IMR-90 (cell line): ENCODE measurements at regions of chr13 and their contacts with region 1.

Region 1: DNA sequence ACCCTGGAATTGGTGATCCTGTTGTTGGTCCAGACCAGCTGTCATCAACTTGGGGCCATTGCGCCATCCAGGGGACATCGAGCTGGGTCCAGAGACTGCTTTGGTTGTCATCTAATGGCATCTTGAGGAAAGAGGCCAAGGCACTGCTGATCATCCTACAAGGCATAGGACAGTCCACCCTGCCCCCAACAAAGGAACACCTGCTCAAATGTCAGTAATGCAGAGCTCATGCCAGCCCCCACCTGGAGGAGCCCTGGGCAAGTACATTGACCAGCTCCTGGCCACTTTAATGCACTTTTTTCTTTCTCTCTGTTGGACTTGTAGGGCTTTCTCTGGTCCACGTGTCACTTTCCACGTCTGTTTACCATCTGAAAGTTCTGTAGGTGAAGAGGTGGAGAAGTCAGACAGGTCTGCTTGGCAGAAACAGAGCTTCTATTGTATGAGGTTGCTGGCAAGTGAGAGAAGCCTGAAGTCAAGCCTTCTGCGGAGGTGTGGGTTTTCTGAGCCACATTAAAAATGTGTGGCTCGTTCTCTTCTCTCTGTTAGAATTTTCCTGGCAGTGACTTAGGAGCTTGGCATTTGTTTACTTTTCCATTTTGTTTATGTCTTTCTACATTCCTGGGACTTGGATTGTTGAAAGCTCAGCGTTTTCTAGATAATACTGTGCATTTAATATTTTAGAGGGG is 124.0 kb upstream of the RNF113B start:
- DNase-seq: peak; percentile 82
- ATAC-seq: peak; percentile 66
- H3K4me3 ChIP-seq: peak overlapping the region; percentile 14; the same call in 1 of the 2 replicates
- H3K27ac ChIP-seq: peak overlapping the region; percentile 94
- H3K4me1 ChIP-seq: peaks cover 47% of the 10 kb centered on the region
- H3K27me3 ChIP-seq: no peaks in the 10 kb centered on the region
- CTCF ChIP-seq: no peak
- POLR2A ChIP-seq: no peak
- RAD21 ChIP-seq: no peak

Region 2: DNA sequence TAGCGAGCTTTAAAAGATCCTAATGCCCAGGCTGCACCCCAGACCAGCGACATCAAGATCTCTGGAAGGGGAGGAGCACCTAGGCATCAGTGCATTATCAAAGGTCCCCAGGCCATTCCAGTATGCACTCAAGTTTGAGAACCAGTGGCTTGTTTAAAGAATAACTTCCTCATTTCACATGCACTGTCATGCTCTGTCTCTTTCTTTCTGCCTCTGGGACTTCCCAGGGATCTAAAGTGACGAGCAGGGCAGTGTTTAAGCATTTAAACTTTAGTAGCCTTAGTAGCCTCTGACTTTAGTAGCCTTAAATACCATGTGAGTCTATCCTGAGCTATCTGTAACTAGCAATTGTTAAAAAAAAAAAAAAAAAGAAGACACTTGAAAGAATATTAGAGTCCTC is 167.2 kb before region 1 on chr13:
- CTCF ChIA-PET with region 1: no interaction called
- POLR2A ChIA-PET with region 1: interaction called, 10 read pairs
- dilution Hi-C with region 1: no loop called
- in situ Hi-C with region 1: no loop called
- intact Hi-C with region 1: no loop called
- DNase-seq: no peak
- ATAC-seq: no peak
- H3K4me3 ChIP-seq: no peak overlapping the region
- H3K27ac ChIP-seq: no peak overlapping the region
- H3K4me1 ChIP-seq: peaks cover 2% of the 10 kb centered on the region; the same call in 1 of the 2 replicates
- H3K27me3 ChIP-seq: no peaks in the 10 kb centered on the region
- CTCF ChIP-seq: no peak
- POLR2A ChIP-seq: no peak
- RAD21 ChIP-seq: no peak

Region 3: DNA sequence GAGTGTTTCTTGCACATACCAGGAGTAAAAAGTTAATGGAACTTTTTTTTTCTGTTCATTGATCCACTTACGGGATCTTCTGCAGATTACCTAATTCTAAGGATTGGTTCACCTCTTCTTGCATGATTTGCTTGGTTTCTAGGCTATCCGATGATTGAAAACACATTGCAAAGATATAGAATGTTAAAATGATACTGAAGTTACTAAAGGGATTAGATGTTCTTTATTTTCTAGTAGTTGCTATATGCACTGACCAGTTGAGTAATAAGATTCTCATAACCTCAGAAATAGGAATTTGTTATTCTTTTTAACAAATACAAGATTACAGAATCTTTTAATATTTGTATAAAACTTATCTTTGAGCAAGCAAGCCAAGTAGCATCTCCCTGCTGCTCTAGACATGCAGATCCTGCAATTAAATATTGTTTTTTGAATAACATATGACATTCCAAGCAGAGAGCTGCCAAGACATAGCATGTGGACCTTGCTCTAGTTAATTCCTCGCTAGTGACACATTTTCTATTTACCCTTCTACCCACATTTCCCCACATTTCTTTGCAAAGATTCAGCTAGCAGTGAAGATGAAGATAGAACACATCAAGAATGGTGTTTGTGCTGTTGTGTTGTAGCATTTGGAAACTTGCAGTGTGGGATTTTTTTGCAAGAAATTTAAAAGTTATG is 72.3 kb before region 1 on chr13:
- CTCF ChIA-PET with region 1: no interaction called
- POLR2A ChIA-PET with region 1: no interaction called
- dilution Hi-C with region 1: no loop called
- in situ Hi-C with region 1: no loop called
- intact Hi-C with region 1: loop called (anchors 2 kb)
- DNase-seq: peak; percentile 74
- ATAC-seq: peak; percentile 71
- H3K4me3 ChIP-seq: no peak overlapping the region
- H3K27ac ChIP-seq: peak overlapping the region; percentile 74; the same call in 1 of the 2 replicates
- H3K4me1 ChIP-seq: peaks cover 20% of the 10 kb centered on the region
- H3K27me3 ChIP-seq: no peaks in the 10 kb centered on the region
- CTCF ChIP-seq: no peak
- POLR2A ChIP-seq: no peak
- RAD21 ChIP-seq: no peak

Region 4: GRCh38 chr13:98370806-98371515 is 69.9 kb after region 1 on chr13:
- CTCF ChIA-PET with region 1: interaction called, 4 read pairs
- POLR2A ChIA-PET with region 1: no interaction called
- dilution Hi-C with region 1: no loop called
- in situ Hi-C with region 1: no loop called
- intact Hi-C with region 1: loop called (anchors 2 kb)
- DNase-seq: peak; percentile 97
- ATAC-seq: peak; percentile 82
- H3K4me3 ChIP-seq: no peak overlapping the region
- H3K27ac ChIP-seq: peak overlapping the region; percentile 98
- H3K4me1 ChIP-seq: peaks cover 26% of the 10 kb centered on the region
- H3K27me3 ChIP-seq: no peaks in the 10 kb centered on the region
- CTCF ChIP-seq: no peak
- POLR2A ChIP-seq: no peak
- RAD21 ChIP-seq: peak; percentile 24; the same call in 1 of the 2 replicates